HCT116 (cell line): ENCODE measurements at regions of chr9 and their contacts with region 1.

Region 1: GRCh38 chr9:111037381-111038305 is 627 bp downstream of the LPAR1 start:
- DNase-seq: peak; percentile 7
- ATAC-seq: peak; percentile 65
- H3K4me3 ChIP-seq: peak overlapping the region; percentile 67 to 85
- H3K27ac ChIP-seq: peak overlapping the region; percentile 75; the same call in 1 of the 2 replicates
- H3K4me1 ChIP-seq: peaks cover 7 to 23% of the 10 kb centered on the region in 2 experiments; a peak in 3 of 4 replicates
- H3K27me3 ChIP-seq: no peaks in the 10 kb centered on the region
- CTCF ChIP-seq: 0 out of 6 replicates have a peak, but pooled peaks of 1 of the 3 experiments have one; percentile 11
- POLR2A ChIP-seq: no peak
- RAD21 ChIP-seq: no peak

Region 2: DNA sequence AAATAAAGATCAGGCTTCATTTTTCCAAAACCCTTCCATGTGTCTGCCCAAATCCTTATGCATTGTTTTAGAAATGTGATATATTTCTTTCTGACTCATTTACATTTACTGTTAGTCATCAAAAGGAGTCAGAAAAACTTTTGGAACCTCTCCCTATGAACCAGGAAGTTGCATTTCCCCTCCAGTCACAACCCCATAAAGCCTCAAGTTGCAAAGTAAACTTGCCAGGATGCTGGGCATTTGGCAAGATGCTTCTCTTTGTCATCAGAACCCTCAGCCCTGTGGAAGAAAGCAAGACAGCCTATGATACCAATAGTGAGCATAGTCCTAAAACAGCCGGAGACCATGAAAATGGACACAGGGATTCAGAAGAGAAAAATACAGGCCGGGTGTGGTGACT is 284.9 kb before region 1 on chr9:
- CTCF ChIA-PET with region 1: no interaction called
- POLR2A ChIA-PET with region 1: no interaction called
- RAD21 ChIA-PET with region 1: no interaction called
- intact Hi-C with region 1: loop called (anchors 5 kb)
- DNase-seq: peak; percentile 64
- ATAC-seq: peak; percentile 64
- H3K4me3 ChIP-seq: no peak overlapping the region
- H3K27ac ChIP-seq: 0 out of 2 replicates have a peak overlapping the region, but pooled peaks have one; percentile 13
- H3K4me1 ChIP-seq: peaks cover 21 to 41% of the 10 kb centered on the region in 2 experiments; a peak in 3 of 4 replicates
- H3K27me3 ChIP-seq: no peaks in the 10 kb centered on the region
- CTCF ChIP-seq: no peak
- POLR2A ChIP-seq: no peak
- RAD21 ChIP-seq: 0 out of 2 replicates have a peak, but pooled peaks have one; percentile 21